Activated CD4-positive, alpha-beta T cell treated with anti-CD3 and anti-CD28 coated beads, Interleukin-2, amount 10 ng/mL, durations not matched to agents 24 days and 14 days (primary cell): ENCODE measurements at regions of chr9 and their contacts with region 1.

Region 1: DNA sequence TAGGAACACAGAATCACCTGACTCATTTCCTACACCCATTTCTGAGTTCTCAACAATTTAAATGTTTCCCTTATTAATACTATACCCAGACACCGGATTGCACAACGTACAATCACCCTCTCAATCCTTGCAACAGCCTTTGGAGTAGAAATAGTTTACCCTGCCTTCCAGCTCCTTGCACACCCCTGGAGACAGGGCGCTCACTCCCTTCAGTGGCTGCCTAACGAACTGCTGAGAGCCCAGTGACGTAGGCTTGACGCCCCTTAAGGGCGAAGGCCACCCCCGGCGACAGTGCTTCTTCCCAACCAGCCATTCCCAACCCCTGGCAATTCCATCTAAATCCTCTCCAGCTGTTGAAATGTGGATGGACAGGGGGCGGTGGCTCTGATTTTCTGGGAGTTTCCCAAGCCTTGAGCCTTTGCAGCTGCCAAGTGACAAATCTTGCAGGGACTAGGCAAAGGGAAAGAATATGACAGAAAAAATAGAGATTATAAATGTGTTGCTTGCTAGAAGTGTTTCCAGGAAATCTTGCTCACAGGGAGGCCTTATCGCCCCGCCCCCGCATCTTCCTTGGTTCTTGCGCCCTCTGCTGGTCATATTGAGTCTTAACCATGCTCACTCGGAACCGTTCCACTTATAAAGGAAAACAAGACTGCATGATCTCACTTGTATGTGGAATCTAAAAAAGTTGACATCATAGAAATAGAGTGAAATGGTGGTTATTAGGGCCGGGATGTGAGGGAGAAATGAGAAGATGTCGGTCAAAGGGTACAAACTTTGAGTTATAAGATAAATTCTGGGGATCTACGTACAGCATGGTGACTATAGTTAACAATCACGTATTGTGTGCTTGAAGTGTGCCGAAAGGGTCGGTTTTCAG is 7.6 kb upstream of the BARX1 start:
- DNase-seq: peak; percentile 94
- H3K4me3 Mint-ChIP-seq: no peak overlapping the region
- H3K27ac Mint-ChIP-seq: no peak overlapping the region
- H3K4me1 Mint-ChIP-seq: peaks cover 28% of the 10 kb centered on the region
- H3K27me3 Mint-ChIP-seq: peaks cover 43% of the 10 kb centered on the region

Region 2: DNA sequence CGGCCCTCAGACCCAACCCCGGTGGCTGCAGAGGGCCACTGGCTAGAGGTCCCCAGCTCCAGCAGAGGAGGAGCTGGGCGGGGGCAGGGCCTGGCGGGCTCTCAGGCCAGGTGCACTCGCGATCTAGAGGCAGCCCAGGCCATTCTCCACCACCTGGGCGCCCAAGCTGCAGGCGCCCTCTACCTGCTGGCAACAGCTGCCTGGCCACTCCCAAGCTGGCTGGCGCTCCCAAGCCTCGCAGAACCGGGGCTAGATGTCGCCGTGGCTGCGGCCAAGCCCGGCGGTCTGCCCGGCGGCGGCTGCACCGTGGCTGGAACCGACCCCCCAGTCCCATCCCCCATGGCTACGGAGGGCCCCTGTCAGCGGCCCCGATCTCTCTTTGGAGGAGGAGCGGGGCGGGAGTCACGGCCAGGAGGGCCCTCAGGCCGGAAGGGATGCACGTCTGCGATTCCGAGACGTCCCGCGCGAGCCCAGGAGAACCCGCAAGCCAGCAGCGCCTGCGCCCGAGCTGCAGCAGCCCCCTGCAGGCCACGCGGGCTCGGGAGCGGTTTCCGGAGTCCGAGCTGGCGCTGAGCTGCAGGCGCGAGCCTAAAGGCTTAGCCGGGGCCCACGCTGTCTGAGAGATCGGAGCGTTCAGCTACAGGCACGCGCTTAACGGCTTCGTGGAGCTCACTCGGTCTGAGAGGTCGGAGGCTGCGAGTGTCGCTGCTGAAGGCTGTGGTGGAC is 1153.9 kb before region 1 on chr9:
- intact Hi-C with region 1: loop called (anchors 5 kb)
- DNase-seq: peak; percentile 89
- H3K4me3 Mint-ChIP-seq: peak overlapping the region; percentile 92
- H3K27ac Mint-ChIP-seq: peak overlapping the region; percentile 59
- H3K4me1 Mint-ChIP-seq: peaks cover 13% of the 10 kb centered on the region
- H3K27me3 Mint-ChIP-seq: peaks cover 60% of the 10 kb centered on the region

Region 3: GRCh38 chr9:93682232-93682968 is 280.4 kb before region 1 on chr9:
- intact Hi-C with region 1: loop called (anchors 1 kb)
- DNase-seq: peak; percentile 90
- H3K4me3 Mint-ChIP-seq: no peak overlapping the region
- H3K27ac Mint-ChIP-seq: no peak overlapping the region
- H3K4me1 Mint-ChIP-seq: peaks cover 3% of the 10 kb centered on the region
- H3K27me3 Mint-ChIP-seq: no peaks in the 10 kb centered on the region

Region 4: GRCh38 chr9:93786204-93786603 is 176.6 kb before region 1 on chr9:
- intact Hi-C with region 1: no loop called
- DNase-seq: no peak
- H3K4me3 Mint-ChIP-seq: no peak overlapping the region
- H3K27ac Mint-ChIP-seq: no peak overlapping the region
- H3K4me1 Mint-ChIP-seq: no peaks in the 10 kb centered on the region
- H3K27me3 Mint-ChIP-seq: peaks cover 27% of the 10 kb centered on the region

Region 5: GRCh38 chr9:93826209-93826608 is 136.6 kb before region 1 on chr9:
- intact Hi-C with region 1: loop called (anchors 1 kb)
- DNase-seq: peak; percentile 86
- H3K4me3 Mint-ChIP-seq: no peak overlapping the region
- H3K27ac Mint-ChIP-seq: no peak overlapping the region
- H3K4me1 Mint-ChIP-seq: peaks cover 5% of the 10 kb centered on the region
- H3K27me3 Mint-ChIP-seq: peaks cover 22% of the 10 kb centered on the region

Region 6: GRCh38 chr9:93949694-93950449 is 12.9 kb before region 1 on chr9:
- intact Hi-C with region 1: loop called (anchors 2 kb)
- DNase-seq: no peak
- H3K4me3 Mint-ChIP-seq: no peak overlapping the region
- H3K27ac Mint-ChIP-seq: no peak overlapping the region
- H3K4me1 Mint-ChIP-seq: peaks cover 29% of the 10 kb centered on the region
- H3K27me3 Mint-ChIP-seq: peaks cover 78% of the 10 kb centered on the region